Activated CD4-positive, alpha-beta memory T cell treated with anti-CD3 and anti-CD28 coated beads for 36 hours (primary cell): ENCODE measurements at regions of chr7 and their contacts with region 1.

Region 1: GRCh38 chr7:4744391-4745264 is 30.8 kb upstream of the AP5Z1 start:
- DNase-seq: peak; percentile 81
- H3K4me3 Mint-ChIP-seq: peak overlapping the region; percentile 81
- H3K27ac Mint-ChIP-seq: peak overlapping the region; percentile 91
- H3K4me1 Mint-ChIP-seq: peaks cover 56% of the 10 kb centered on the region
- H3K27me3 Mint-ChIP-seq: no peaks in the 10 kb centered on the region

Region 2: GRCh38 chr7:4479367-4480039 is 265.1 kb before region 1 on chr7:
- CTCF ChIA-PET with region 1: no interaction called
- POLR2A ChIA-PET with region 1: no interaction called
- intact Hi-C with region 1: no loop called
- DNase-seq: peak; percentile 16
- H3K4me3 Mint-ChIP-seq: no peak overlapping the region
- H3K27ac Mint-ChIP-seq: no peak overlapping the region
- H3K4me1 Mint-ChIP-seq: no peaks in the 10 kb centered on the region
- H3K27me3 Mint-ChIP-seq: no peaks in the 10 kb centered on the region

Region 3: DNA sequence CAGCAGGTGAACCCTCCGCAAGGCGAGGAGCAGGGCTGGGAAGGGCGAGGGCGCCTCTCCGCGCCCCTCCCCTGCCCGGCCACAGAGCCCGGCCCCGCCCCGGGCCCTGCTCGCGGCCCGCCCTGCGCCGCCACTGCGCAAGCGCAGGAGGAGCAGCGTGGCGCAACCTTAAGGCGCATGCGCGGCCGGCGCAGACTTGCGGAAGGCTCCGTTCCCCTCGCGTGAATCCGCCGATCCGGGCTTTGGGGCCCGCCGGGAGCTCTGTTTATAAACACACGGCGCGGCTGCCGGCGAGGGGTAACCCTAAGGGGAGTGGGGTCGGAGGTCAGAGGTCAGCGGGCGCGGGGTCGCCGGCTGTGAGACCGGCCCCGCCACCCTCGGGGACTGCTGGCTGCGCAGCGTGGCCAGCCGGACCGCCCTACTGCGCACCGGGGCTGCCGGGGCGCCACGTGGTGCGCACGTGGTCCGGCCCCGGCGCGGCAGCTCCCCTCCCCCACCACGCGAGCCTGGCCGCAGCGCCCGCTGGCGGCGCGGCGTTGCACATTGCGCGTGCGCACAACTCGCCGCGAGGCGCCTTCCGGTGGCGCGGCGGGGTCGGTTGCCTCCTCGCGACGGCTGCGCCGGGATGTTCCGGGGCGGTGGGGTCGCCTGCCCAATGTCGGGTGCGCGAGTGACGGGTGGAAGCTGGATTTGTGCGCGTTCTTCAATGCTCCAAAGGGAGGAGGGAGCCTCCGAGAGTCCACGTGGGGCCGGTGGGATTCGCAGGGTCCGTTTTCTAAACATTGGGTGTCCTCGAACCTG is 102.8 kb before region 1 on chr7:
- CTCF ChIA-PET with region 1: interaction called, 4 read pairs
- POLR2A ChIA-PET with region 1: interaction called, 7 read pairs
- intact Hi-C with region 1: loop called (anchors 1 kb)
- DNase-seq: peak; percentile 96
- H3K4me3 Mint-ChIP-seq: peak overlapping the region; percentile 87
- H3K27ac Mint-ChIP-seq: peak overlapping the region; percentile 91
- H3K4me1 Mint-ChIP-seq: peaks cover 12% of the 10 kb centered on the region
- H3K27me3 Mint-ChIP-seq: no peaks in the 10 kb centered on the region

Region 4: GRCh38 chr7:4725014-4725849 is 19.4 kb before region 1 on chr7:
- CTCF ChIA-PET with region 1: interaction called, 3 read pairs
- POLR2A ChIA-PET with region 1: interaction called, 3 read pairs
- intact Hi-C with region 1: loop called (anchors 2 kb)
- DNase-seq: peak; percentile 70
- H3K4me3 Mint-ChIP-seq: peak overlapping the region; percentile 80
- H3K27ac Mint-ChIP-seq: peak overlapping the region; percentile 72
- H3K4me1 Mint-ChIP-seq: peaks cover 37% of the 10 kb centered on the region
- H3K27me3 Mint-ChIP-seq: no peaks in the 10 kb centered on the region